ENCODE measurements at regions of chr15 and their contacts with region 1.

Region 1: GRCh38 chr15:70474471-70475396 is 288.6 kb downstream of the UACA start:
- DNase-seq: peak; percentile 54 to 90
- H3K4me3 ChIP-seq: no peak overlapping the region
- CTCF ChIP-seq: no peak
- POLR2A ChIP-seq: no peak

Region 2: GRCh38 chr15:69749797-69750196 is 724.9 kb before region 1 on chr15:
- intact Hi-C with region 1: loop called (anchors 10 kb)
- DNase-seq: no peak
- H3K4me3 ChIP-seq: no peak overlapping the region
- CTCF ChIP-seq: no peak
- POLR2A ChIP-seq: no peak

Region 3: DNA sequence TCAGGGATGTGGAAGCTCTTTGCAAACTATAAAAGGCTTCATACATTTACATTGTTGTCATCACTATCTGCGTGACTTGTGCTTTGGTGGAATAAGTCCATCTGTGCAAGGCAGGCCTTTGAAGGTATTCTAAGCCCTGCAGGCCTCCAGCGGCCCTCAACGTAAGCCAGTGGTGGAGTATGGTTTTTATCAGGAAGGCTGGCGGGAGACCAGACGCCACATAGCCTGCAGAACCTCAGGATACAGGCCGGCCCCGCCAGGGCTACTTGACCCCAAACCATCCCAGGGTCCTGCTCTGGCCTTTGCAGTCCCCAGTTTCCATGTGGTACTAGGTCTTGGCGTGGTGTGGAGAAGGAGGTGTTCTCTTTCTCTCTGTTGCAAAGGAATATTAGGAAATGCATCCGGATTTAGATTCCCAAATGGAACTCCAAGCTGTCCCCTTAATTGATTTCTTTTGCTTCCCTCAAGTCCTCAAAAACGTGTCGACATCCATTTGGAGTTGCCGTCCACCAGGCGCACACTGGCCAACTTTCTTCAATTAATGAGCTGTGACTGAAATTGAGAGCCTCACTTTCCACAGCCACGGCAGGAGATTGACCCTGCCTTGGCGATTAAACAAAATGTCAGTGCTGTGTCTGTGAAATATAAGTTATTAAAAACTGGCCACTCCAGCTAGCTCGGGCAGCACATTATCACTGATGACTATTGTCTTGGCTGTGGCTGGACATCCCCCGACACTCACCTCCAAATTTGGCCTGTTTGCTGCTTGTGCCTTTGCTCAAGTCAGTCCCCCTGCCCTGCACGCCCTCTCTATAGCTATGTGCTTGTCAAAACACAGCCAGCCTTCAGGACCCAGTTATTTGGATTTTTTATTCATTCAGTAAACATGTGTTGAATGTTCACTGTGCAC is 137.2 kb before region 1 on chr15:
- intact Hi-C with region 1: no loop called
- DNase-seq: peak in 1 of 2 donors; percentile 62
- H3K4me3 ChIP-seq: no peak overlapping the region
- CTCF ChIP-seq: no peak
- POLR2A ChIP-seq: no peak

Measured in lower leg skin (tissue), 4 donors.